ENCODE measurements at regions of chr1 and their contacts with region 1.

Region 1: GRCh38 chr1:203870264-203870663 is 8.9 kb downstream of the SNRPE start:
- DNase-seq: no peak
- ATAC-seq: no peak
- H3K4me3 ChIP-seq: no peak overlapping the region
- H3K4me3 Mint-ChIP-seq: no peak overlapping the region
- H3K27ac ChIP-seq: no peak overlapping the region
- H3K27ac Mint-ChIP-seq: no peak overlapping the region
- H3K4me1 ChIP-seq: no peaks in the 10 kb centered on the region
- H3K4me1 Mint-ChIP-seq: peaks cover 5% of the 10 kb centered on the region
- H3K27me3 ChIP-seq: no peaks in the 10 kb centered on the region
- H3K27me3 Mint-ChIP-seq: no peaks in the 10 kb centered on the region
- CTCF ChIP-seq: no peak

Region 2: GRCh38 chr1:203127666-203128430 is 742.4 kb before region 1 on chr1 and contains the start of gene ADORA1:
- CTCF ChIA-PET with region 1: no interaction called
- POLR2A ChIA-PET with region 1: no interaction called
- intact Hi-C with region 1: no loop called
- DNase-seq: peak in 2 of 9 experiments; percentile 5 to 45
- ATAC-seq: no peak
- H3K4me3 ChIP-seq: no peak within 1 kb of the TSS
- H3K4me3 Mint-ChIP-seq: peak within 1 kb of the TSS; percentile 16
- H3K27ac ChIP-seq: no peak within 1 kb of the TSS
- H3K27ac Mint-ChIP-seq: no peak within 1 kb of the TSS
- H3K4me1 ChIP-seq: no peaks in the 10 kb centered on the region
- H3K4me1 Mint-ChIP-seq: peaks cover 11% of the 10 kb centered on the region
- H3K27me3 ChIP-seq: peaks cover 0 to 6% of the 10 kb centered on the region in 2 experiments
- H3K27me3 Mint-ChIP-seq: peaks cover 57% of the 10 kb centered on the region
- CTCF ChIP-seq: no peak
- total RNA-seq, gene ADORA1: not detected

Region 3: GRCh38 chr1:203765029-203765837 is 105.0 kb before region 1 on chr1 and contains the start of gene LAX1:
- CTCF ChIA-PET with region 1: no interaction called
- POLR2A ChIA-PET with region 1: no interaction called
- intact Hi-C with region 1: no loop called
- DNase-seq: peak; percentile 39 to 92 (median 81)
- ATAC-seq: peak; percentile 85
- H3K4me3 ChIP-seq: peak within 1 kb of the TSS; percentile 62 to 63
- H3K4me3 Mint-ChIP-seq: peak within 1 kb of the TSS; percentile 95
- H3K27ac ChIP-seq: peak within 1 kb of the TSS; percentile 72 to 87
- H3K27ac Mint-ChIP-seq: peak within 1 kb of the TSS; percentile 99
- H3K4me1 ChIP-seq: peaks cover 36% of the 10 kb centered on the region
- H3K4me1 Mint-ChIP-seq: peaks cover 58% of the 10 kb centered on the region
- H3K27me3 ChIP-seq: no peaks in the 10 kb centered on the region
- H3K27me3 Mint-ChIP-seq: no peaks in the 10 kb centered on the region
- CTCF ChIP-seq: no peak
- total RNA-seq, gene LAX1: 13.7 to 16.1 TPM

Region 4: GRCh38 chr1:204128964-204129896 is 259.0 kb after region 1 on chr1:
- CTCF ChIA-PET with region 1: interaction called, 12 read pairs
- POLR2A ChIA-PET with region 1: no interaction called
- intact Hi-C with region 1: no loop called
- DNase-seq: peak; percentile 27 to 82 (median 57)
- ATAC-seq: peak; percentile 89
- H3K4me3 ChIP-seq: no peak overlapping the region
- H3K4me3 Mint-ChIP-seq: no peak overlapping the region
- H3K27ac ChIP-seq: no peak overlapping the region
- H3K27ac Mint-ChIP-seq: no peak overlapping the region
- H3K4me1 ChIP-seq: peaks cover 7% of the 10 kb centered on the region
- H3K4me1 Mint-ChIP-seq: peaks cover 10% of the 10 kb centered on the region
- H3K27me3 ChIP-seq: no peaks in the 10 kb centered on the region
- H3K27me3 Mint-ChIP-seq: no peaks in the 10 kb centered on the region
- CTCF ChIP-seq: peak; percentile 71